SK-N-SH (cell line): ENCODE measurements at regions of chr1 and their contacts with region 1.

Region 1: DNA sequence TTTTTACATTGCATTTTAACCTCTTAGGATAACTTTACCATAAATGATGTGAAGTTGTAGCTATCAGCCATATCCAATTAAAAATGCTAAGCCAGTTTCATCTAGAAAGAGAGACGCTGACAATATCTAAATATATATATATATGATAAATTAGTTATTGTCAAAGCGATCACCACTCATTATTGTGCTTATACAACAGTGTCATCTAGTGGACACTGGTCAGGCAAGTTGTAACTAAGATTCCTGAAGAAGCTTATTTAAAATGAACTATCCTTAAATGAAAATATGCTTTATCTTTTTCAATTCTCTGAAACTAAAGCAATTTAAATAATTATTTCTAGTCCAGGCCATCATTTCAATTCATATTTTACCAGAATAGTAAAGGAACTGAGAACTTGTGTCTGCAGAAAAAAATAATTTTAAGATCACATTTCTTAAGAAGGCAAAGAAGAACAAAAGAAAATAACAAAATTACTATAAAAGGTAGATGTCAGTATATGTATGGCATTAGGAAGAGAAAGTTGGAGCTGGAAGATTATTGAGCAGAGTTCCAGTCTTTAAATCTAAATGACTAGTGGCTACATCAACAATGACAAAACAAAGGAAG is 193.3 kb upstream of the SNX7 start:
- DNase-seq: peak; percentile 9
- H3K4me3 ChIP-seq: no peak overlapping the region
- H3K27ac ChIP-seq: peak overlapping the region in 1 of 2 experiments; percentile 82; a peak in 2 of 4 replicates
- H3K4me1 ChIP-seq: peaks cover 6 to 15% of the 10 kb centered on the region in 2 experiments; a peak in 3 of 4 replicates
- H3K27me3 ChIP-seq: no peaks in the 10 kb centered on the region
- CTCF ChIP-seq: peak; percentile 92
- EP300 ChIP-seq: no peak
- RAD21 ChIP-seq: peak; percentile 95

Region 2: GRCh38 chr1:98048244-98048643 is 420.0 kb before region 1 on chr1:
- CTCF ChIA-PET with region 1: interaction called, 53 read pairs
- POLR2A ChIA-PET with region 1: interaction called, 5 read pairs
- DNase-seq: peak; percentile 59
- H3K4me3 ChIP-seq: peak overlapping the region; percentile 74 to 79
- H3K27ac ChIP-seq: peak overlapping the region; percentile 56 to 96
- H3K4me1 ChIP-seq: peaks cover 12 to 25% of the 10 kb centered on the region in 2 experiments; a peak in 3 of 4 replicates
- H3K27me3 ChIP-seq: no peaks in the 10 kb centered on the region
- CTCF ChIP-seq: peak; percentile 8; the same call in 1 of the 2 replicates
- EP300 ChIP-seq: no peak
- RAD21 ChIP-seq: peak; percentile 35; the same call in 1 of the 2 replicates

Region 3: GRCh38 chr1:98053471-98054366 is 414.5 kb before region 1 on chr1:
- CTCF ChIA-PET with region 1: interaction called, 53 read pairs
- POLR2A ChIA-PET with region 1: interaction called, 5 read pairs
- DNase-seq: peak; percentile 87
- H3K4me3 ChIP-seq: peak overlapping the region; percentile 47 to 56; a peak in 3 of 4 replicates
- H3K27ac ChIP-seq: peak overlapping the region; percentile 72 to 82; a peak in 3 of 4 replicates
- H3K4me1 ChIP-seq: peaks cover 9 to 12% of the 10 kb centered on the region in 2 experiments; a peak in 3 of 4 replicates
- H3K27me3 ChIP-seq: no peaks in the 10 kb centered on the region
- CTCF ChIP-seq: peak; percentile 69
- EP300 ChIP-seq: no peak
- RAD21 ChIP-seq: peak; percentile 68

Region 4: DNA sequence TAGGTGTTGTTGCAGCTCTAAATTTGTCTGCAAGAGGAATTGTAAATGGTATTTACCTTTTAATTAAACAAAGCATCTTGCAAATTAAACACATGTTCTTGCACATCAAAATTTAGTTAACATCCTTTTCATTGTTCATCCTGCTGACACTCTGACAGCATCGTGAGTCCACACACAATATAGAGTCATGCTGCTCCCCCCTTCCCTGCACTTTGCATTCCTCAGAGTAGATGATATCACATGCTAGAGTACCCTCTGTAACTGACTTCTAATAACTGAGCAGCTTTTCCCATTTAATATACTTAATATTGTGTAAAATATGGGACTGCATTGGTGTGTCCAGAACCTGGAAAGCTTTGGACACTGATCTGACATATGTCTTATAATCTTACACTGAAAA is 408.6 kb before region 1 on chr1:
- CTCF ChIA-PET with region 1: interaction called, 53 read pairs
- POLR2A ChIA-PET with region 1: no interaction called
- DNase-seq: no peak
- H3K4me3 ChIP-seq: no peak overlapping the region
- H3K27ac ChIP-seq: no peak overlapping the region
- H3K4me1 ChIP-seq: peaks cover 3 to 4% of the 10 kb centered on the region in 2 experiments; a peak in 3 of 4 replicates
- H3K27me3 ChIP-seq: no peaks in the 10 kb centered on the region
- CTCF ChIP-seq: no peak
- EP300 ChIP-seq: 0 out of 4 replicates have a peak, but pooled peaks of 1 of the 2 experiments have one; percentile 11
- RAD21 ChIP-seq: no peak

Region 5: GRCh38 chr1:98405581-98406059 is 62.6 kb before region 1 on chr1:
- CTCF ChIA-PET with region 1: interaction called, 10 read pairs
- POLR2A ChIA-PET with region 1: no interaction called
- DNase-seq: no peak
- H3K4me3 ChIP-seq: no peak overlapping the region
- H3K27ac ChIP-seq: peak overlapping the region; percentile 32 to 67; a peak in 3 of 4 replicates
- H3K4me1 ChIP-seq: peaks cover 28 to 29% of the 10 kb centered on the region in 2 experiments; a peak in 3 of 4 replicates
- H3K27me3 ChIP-seq: no peaks in the 10 kb centered on the region
- CTCF ChIP-seq: no peak
- EP300 ChIP-seq: no peak
- RAD21 ChIP-seq: no peak

Region 6: GRCh38 chr1:98452162-98452561 is 16.1 kb before region 1 on chr1:
- CTCF ChIA-PET with region 1: interaction called, 32 read pairs
- POLR2A ChIA-PET with region 1: interaction called, 4 read pairs
- DNase-seq: peak; percentile 31
- H3K4me3 ChIP-seq: no peak overlapping the region
- H3K27ac ChIP-seq: peak overlapping the region in 1 of 2 experiments; percentile 99; a peak in 2 of 4 replicates
- H3K4me1 ChIP-seq: peaks cover 8 to 16% of the 10 kb centered on the region in 2 experiments; a peak in 3 of 4 replicates
- H3K27me3 ChIP-seq: no peaks in the 10 kb centered on the region
- CTCF ChIP-seq: no peak
- EP300 ChIP-seq: peak in 1 of 2 experiments; percentile 96; a peak in 2 of 4 replicates
- RAD21 ChIP-seq: peak; percentile 45; the same call in 1 of the 2 replicates

Region 7: GRCh38 chr1:98688110-98688739 is 220.0 kb after region 1 on chr1:
- CTCF ChIA-PET with region 1: no interaction called
- POLR2A ChIA-PET with region 1: no interaction called
- DNase-seq: no peak
- H3K4me3 ChIP-seq: no peak overlapping the region
- H3K27ac ChIP-seq: no peak overlapping the region
- H3K4me1 ChIP-seq: no peaks in the 10 kb centered on the region
- H3K27me3 ChIP-seq: no peaks in the 10 kb centered on the region
- CTCF ChIP-seq: no peak
- EP300 ChIP-seq: no peak
- RAD21 ChIP-seq: no peak